ENCODE measurements at regions of chr5 and their contacts with region 1.

Region 1: GRCh38 chr5:135944967-135945560 is 9.7 kb downstream of the LECT2 start:
- DNase-seq: peak; percentile 44 to 89
- ATAC-seq: peak; percentile 74 to 89; a peak in 5 of 6 replicates
- H3K4me3 ChIP-seq: no peak overlapping the region
- H3K27ac ChIP-seq: peak overlapping the region; percentile 55 to 63
- H3K4me1 ChIP-seq: peaks cover 15% of the 10 kb centered on the region
- CTCF ChIP-seq: peak; percentile 93
- EP300 ChIP-seq: no peak
- POLR2A ChIP-seq: no peak
- RAD21 ChIP-seq: peak; percentile 94 to 96

Region 2: DNA sequence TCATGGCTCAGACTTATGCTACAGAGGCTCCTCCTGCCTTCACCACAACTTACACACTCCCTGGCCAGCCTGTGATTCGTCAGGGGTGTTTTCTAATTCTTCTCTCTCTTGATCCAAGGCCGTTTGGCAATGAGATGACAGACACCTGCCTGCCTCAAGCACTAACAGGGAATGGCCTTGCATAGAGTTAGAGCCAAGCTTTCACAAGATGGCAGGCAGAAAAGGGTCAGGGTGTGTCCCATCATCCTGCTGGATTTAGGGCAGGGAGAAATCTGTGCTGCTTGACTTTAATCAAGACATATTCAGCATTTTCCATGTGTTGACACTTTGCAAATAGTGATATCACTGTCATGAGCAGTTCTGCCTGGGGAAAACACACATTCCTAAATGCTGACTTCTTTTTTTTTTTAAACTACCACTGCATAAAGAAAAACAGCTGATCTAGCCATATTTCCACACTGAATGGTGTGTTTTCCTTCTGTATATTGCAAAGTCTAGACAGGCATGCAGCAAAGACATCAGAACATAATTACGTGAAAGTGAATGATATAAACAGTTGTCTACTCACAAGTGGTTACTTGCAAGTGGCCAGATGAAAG is 205.6 kb before region 1 on chr5:
- CTCF ChIA-PET with region 1: no interaction called
- POLR2A ChIA-PET with region 1: no interaction called
- DNase-seq: no peak
- ATAC-seq: no peak
- H3K4me3 ChIP-seq: no peak overlapping the region
- H3K27ac ChIP-seq: no peak overlapping the region
- H3K4me1 ChIP-seq: no peaks in the 10 kb centered on the region
- CTCF ChIP-seq: no peak
- EP300 ChIP-seq: no peak
- POLR2A ChIP-seq: no peak
- RAD21 ChIP-seq: no peak

Region 3: GRCh38 chr5:135930029-135930948 is 14.8 kb before region 1 on chr5:
- CTCF ChIA-PET with region 1: interaction called, 24 read pairs
- POLR2A ChIA-PET with region 1: no interaction called
- DNase-seq: peak; percentile 35 to 48
- ATAC-seq: peak; percentile 92 to 96
- H3K4me3 ChIP-seq: peak overlapping the region; percentile 67
- H3K27ac ChIP-seq: peak overlapping the region; percentile 79 to 93
- H3K4me1 ChIP-seq: peaks cover 6% of the 10 kb centered on the region; the same call in 2 of the 3 replicates
- CTCF ChIP-seq: no peak; the same call in 2 of the 3 replicates
- EP300 ChIP-seq: no peak
- POLR2A ChIP-seq: peak; percentile 13; the same call in 1 of the 2 replicates
- RAD21 ChIP-seq: 0 out of 5 replicates have a peak, but pooled peaks of 1 of the 2 experiments have one; percentile 17

Region 4: DNA sequence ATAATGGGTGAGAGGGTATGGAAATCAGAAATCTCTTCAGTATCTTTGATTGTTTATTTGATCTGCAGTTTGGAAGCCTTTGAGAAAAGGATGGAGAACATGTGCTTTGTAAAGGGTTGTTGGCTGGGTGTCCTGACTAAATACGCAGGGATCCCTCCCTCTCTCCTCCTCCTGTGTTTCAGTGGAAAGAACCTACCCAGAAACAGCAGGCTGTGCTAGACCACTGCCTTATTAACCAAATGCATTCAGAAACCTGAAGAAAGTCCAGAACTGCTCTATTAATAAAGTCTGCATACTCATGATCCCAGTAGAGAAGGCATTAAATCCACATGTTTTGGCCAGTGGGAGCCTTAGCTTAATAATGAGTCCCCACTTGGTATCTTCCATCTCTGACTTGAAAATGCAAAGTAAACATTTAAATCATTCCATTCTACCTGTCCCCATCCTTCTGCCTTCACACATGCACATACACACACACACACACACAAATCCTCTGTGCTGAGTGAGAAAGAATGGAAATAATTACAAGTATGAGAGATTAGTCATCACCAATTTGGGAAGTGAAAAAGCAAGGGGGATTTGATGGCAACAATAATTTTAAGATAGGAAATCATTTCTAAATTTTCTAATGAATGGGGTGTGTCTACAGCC is 19.7 kb after region 1 on chr5:
- CTCF ChIA-PET with region 1: interaction called, 30 read pairs
- POLR2A ChIA-PET with region 1: no interaction called
- DNase-seq: no peak
- ATAC-seq: no peak
- H3K4me3 ChIP-seq: no peak overlapping the region
- H3K27ac ChIP-seq: peak overlapping the region in 1 of 2 experiments; percentile 48; a peak in 2 of 6 replicates
- H3K4me1 ChIP-seq: peaks cover 6% of the 10 kb centered on the region; the same call in 1 of the 3 replicates
- CTCF ChIP-seq: no peak
- EP300 ChIP-seq: no peak
- POLR2A ChIP-seq: no peak
- RAD21 ChIP-seq: no peak

Region 5: DNA sequence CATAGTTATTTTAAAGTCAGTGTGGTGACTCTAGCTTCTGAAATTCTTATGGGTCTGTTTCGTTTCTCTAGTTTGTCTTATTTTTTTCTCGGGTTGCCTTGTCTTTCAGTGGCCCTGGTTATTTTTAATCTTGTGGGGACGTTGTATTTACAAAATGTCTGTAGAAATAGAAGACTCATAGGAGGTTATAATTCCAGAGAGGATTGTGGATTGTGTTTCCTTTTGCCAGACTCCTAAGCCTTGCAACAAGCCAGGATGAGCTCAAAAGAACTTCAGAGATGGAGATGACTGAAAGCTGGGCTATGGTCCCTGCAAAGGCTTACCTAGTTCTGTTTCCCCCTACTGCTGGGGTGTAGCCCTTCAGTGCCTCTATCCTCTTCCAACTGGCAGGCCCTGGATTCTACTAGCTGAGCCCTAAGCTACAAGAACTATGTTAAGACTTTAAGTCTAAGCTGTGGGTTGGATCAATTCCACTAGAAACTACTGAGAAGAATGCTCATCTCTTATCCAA is 41.9 kb after region 1 on chr5:
- CTCF ChIA-PET with region 1: interaction called, 12 read pairs
- POLR2A ChIA-PET with region 1: no interaction called
- DNase-seq: no peak
- ATAC-seq: no peak; a peak in 2 of 6 replicates
- H3K4me3 ChIP-seq: no peak overlapping the region
- H3K27ac ChIP-seq: peak overlapping the region in 1 of 2 experiments; percentile 60; a peak in 3 of 6 replicates
- H3K4me1 ChIP-seq: no peaks in the 10 kb centered on the region
- CTCF ChIP-seq: no peak
- EP300 ChIP-seq: no peak
- POLR2A ChIP-seq: no peak
- RAD21 ChIP-seq: no peak

Region 6: DNA sequence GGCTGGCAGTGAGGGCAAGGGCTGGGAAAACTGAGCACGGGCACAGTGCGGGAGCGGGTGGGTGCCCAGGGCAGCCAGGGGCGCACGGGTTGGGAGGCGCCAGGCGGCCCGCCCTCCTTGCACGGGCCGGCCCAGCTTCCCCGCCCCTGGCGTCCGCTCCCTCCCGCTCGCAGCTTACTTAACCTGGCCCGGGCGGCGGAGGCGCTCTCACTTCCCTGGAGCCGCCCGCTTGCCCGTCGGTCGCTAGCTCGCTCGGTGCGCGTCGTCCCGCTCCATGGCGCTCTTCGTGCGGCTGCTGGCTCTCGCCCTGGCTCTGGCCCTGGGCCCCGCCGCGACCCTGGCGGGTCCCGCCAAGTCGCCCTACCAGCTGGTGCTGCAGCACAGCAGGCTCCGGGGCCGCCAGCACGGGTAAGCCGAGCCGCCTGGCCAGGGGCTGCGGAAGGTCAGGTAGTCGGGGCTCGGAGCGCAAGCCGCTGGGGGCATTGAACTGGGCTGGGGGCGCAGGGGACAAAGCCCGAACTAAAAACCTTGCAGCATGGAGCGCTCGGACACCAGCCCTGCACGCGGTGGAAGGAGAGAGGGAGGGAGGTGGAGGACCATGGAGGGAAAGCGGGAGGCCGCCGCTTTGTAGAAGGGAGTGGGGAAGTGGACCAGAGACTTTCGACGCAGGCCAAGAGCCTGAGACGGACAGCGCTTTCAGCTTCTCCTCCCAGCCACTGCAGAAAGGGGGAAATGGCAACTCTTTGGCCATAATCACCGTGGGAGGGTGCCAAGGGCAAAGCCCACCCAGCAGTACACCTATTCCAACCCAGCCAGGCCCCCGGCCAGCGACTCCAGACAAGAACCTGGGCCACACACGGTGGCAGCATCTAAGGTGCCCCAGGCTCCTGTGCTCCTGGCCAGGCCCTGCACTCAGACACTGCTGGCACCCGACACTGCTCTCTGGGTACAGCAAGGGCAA is 84.0 kb after region 1 on chr5 and contains the start of gene TGFBI:
- CTCF ChIA-PET with region 1: interaction called, 18 read pairs
- POLR2A ChIA-PET with region 1: interaction called, 3 read pairs
- DNase-seq: peak; percentile 78 to 83
- ATAC-seq: peak; percentile 89 to 94
- H3K4me3 ChIP-seq: peak within 1 kb of the TSS; percentile 97
- H3K27ac ChIP-seq: peak within 1 kb of the TSS; percentile 99 to 100
- H3K4me1 ChIP-seq: peaks cover 52% of the 10 kb centered on the region
- CTCF ChIP-seq: no peak; the same call in 2 of the 3 replicates
- EP300 ChIP-seq: no peak
- POLR2A ChIP-seq: peak; percentile 98
- RAD21 ChIP-seq: peak in 1 of 2 experiments; percentile 51; a peak in 3 of 5 replicates
- polyA plus RNA-seq, gene TGFBI: 1,135 and 1,466 TPM in 2 replicates

Region 7: GRCh38 chr5:136037001-136037705 is 92.1 kb after region 1 on chr5:
- CTCF ChIA-PET with region 1: interaction called, 18 read pairs
- POLR2A ChIA-PET with region 1: interaction called, 6 read pairs
- DNase-seq: no peak
- ATAC-seq: no peak
- H3K4me3 ChIP-seq: no peak overlapping the region
- H3K27ac ChIP-seq: peak overlapping the region; percentile 5 to 77; a peak in 4 of 6 replicates
- H3K4me1 ChIP-seq: peaks cover 99% of the 10 kb centered on the region
- CTCF ChIP-seq: no peak
- EP300 ChIP-seq: no peak
- POLR2A ChIP-seq: no peak
- RAD21 ChIP-seq: no peak

Region 8: GRCh38 chr5:136053336-136054141 is 108.5 kb after region 1 on chr5:
- CTCF ChIA-PET with region 1: interaction called, 40 read pairs
- POLR2A ChIA-PET with region 1: no interaction called
- DNase-seq: peak; percentile 94 to 95
- ATAC-seq: peak; percentile 54 to 73
- H3K4me3 ChIP-seq: 0 out of 3 replicates have a peak overlapping the region, but pooled peaks have one; percentile 17
- H3K27ac ChIP-seq: peak overlapping the region; percentile 86 to 93
- H3K4me1 ChIP-seq: peaks cover 94% of the 10 kb centered on the region
- CTCF ChIP-seq: no peak
- EP300 ChIP-seq: peak; percentile 91 to 96; a peak in 4 of 5 replicates
- POLR2A ChIP-seq: no peak
- RAD21 ChIP-seq: peak; percentile 22 to 43; a peak in 4 of 5 replicates

Region 9: GRCh38 chr5:136130580-136130979 is 185.5 kb after region 1 on chr5:
- CTCF ChIA-PET with region 1: no interaction called
- POLR2A ChIA-PET with region 1: no interaction called
- DNase-seq: no peak
- ATAC-seq: no peak
- H3K4me3 ChIP-seq: no peak overlapping the region
- H3K27ac ChIP-seq: no peak overlapping the region
- H3K4me1 ChIP-seq: peaks cover 20% of the 10 kb centered on the region
- CTCF ChIP-seq: no peak
- EP300 ChIP-seq: no peak
- POLR2A ChIP-seq: no peak
- RAD21 ChIP-seq: no peak

Measured in A549 (cell line).